ENCODE measurements at regions of chr6 and their contacts with region 1.

Region 1: GRCh38 chr6:150865406-150866146 is at the start of gene MTHFD1L:
- DNase-seq: peak in 1 of 2 experiments; percentile 89
- H3K4me3 ChIP-seq: peak within 1 kb of the TSS; percentile 56 to 96 (median 74)
- H3K27ac ChIP-seq: peak within 1 kb of the TSS; percentile 90
- H3K4me1 ChIP-seq: peaks cover 0 to 3% (median 1%) of the 10 kb centered on the region in 4 experiments; a peak in 2 of 7 replicates
- H3K27me3 ChIP-seq: no peaks in the 10 kb centered on the region
- CTCF ChIP-seq: peak; percentile 45 to 58 (median 55)
- EP300 ChIP-seq: peak in 1 of 2 experiments; percentile 17; a peak in 1 of 3 replicates
- POLR2A ChIP-seq: no peak
- RAD21 ChIP-seq: 0 out of 4 replicates have a peak, but pooled peaks of 1 of the 2 experiments have one; percentile 16
- total RNA-seq, gene MTHFD1L: 104 and 105 TPM in 2 replicates

Region 2: DNA sequence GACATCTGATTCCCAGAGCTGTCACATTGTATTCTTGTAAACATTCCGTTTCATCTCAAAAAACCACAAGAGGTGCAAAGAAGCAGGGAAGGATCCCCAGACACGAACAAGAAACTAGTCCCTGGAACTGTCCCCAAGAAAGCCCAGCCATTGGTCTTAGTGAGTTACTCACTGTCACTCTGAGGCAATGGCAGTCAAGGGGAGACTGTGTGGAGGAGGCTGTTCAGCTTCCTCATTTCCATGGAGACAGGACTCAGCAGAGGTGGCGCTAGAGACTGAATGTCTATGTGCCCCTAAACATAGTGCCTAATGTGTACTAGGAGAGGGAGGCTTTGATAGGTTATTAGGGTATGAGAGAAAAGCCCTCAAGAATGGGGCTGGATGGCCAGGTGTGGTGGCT is 890.8 kb before region 1 on chr6:
- CTCF ChIA-PET with region 1: no interaction called
- POLR2A ChIA-PET with region 1: no interaction called
- DNase-seq: peak in 1 of 2 experiments; percentile 38
- H3K4me3 ChIP-seq: no peak overlapping the region
- H3K27ac ChIP-seq: no peak overlapping the region
- H3K4me1 ChIP-seq: no peaks in the 10 kb centered on the region
- H3K27me3 ChIP-seq: peaks cover 3 to 43% (median 20%) of the 10 kb centered on the region in 4 experiments
- CTCF ChIP-seq: peak in 1 of 3 experiments; percentile 4; a peak in 1 of 4 replicates
- EP300 ChIP-seq: no peak
- POLR2A ChIP-seq: no peak
- RAD21 ChIP-seq: peak in 1 of 2 experiments; percentile 11; a peak in 1 of 4 replicates

Region 3: DNA sequence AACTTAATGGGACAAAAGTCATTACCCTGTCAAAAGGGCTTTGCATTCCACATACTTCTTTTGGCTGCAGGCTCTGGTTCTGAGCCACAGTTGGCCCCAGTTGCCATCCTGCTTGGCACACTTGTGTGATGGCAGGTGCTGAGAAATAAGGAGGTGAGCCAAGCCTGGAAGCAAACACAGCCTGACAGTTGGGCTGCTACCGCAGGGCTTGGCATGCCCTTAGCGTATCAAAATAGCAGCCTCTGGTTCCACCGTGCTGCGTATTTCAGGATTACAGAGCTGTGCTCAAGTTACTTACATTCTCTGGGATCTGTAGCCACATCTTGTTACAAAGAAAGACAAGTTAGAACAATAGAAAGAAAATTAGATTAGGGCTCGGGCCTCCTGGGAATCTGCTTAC is 11.0 kb after region 1 on chr6:
- CTCF ChIA-PET with region 1: interaction called, 13 read pairs
- POLR2A ChIA-PET with region 1: interaction called, 69 read pairs
- DNase-seq: no peak
- H3K4me3 ChIP-seq: no peak overlapping the region
- H3K27ac ChIP-seq: no peak overlapping the region
- H3K4me1 ChIP-seq: peaks cover 2 to 21% (median 11%) of the 10 kb centered on the region in 4 experiments; a peak in 6 of 7 replicates
- H3K27me3 ChIP-seq: no peaks in the 10 kb centered on the region
- CTCF ChIP-seq: no peak
- EP300 ChIP-seq: no peak
- POLR2A ChIP-seq: no peak
- RAD21 ChIP-seq: no peak

Region 4: DNA sequence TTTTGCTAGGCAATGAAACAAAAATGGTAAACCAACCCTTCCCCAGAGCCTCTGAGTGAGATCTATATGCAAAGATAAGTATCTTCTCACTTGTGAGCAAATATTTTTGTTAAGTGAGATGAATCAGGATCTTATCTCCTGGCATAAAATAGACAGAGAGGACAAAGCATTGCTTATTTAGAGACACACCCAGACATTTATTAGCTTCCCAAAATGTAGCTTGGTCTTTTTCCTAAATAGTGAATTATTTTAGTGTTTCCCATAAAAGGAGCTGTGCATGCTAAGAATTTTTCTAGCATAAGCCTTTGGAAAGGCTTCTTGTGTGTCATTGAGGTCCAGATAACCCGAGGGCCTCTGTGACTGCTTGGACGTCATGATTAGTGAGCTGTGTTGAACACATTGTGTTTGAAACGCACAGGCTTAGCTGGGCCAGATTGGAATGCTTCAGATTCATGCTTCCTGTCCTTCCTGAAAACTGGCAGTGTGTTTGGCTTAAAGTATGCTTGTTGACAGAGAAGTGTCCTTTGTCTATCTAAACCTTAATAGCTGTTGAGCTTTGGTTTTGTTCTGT is 16.4 kb after region 1 on chr6:
- CTCF ChIA-PET with region 1: interaction called, 3 read pairs
- POLR2A ChIA-PET with region 1: interaction called, 69 read pairs
- DNase-seq: no peak
- H3K4me3 ChIP-seq: no peak overlapping the region
- H3K27ac ChIP-seq: no peak overlapping the region
- H3K4me1 ChIP-seq: peaks cover 2 to 15% (median 6%) of the 10 kb centered on the region in 4 experiments; a peak in 6 of 7 replicates
- H3K27me3 ChIP-seq: no peaks in the 10 kb centered on the region
- CTCF ChIP-seq: no peak
- EP300 ChIP-seq: no peak
- POLR2A ChIP-seq: no peak
- RAD21 ChIP-seq: no peak